WTC11 (cell line): ENCODE measurements at regions of chr16 and their contacts with region 1.

Region 1: GRCh38 chr16:50665128-50665878 is 15.8 kb downstream of the SNX20 start:
- DNase-seq: peak; percentile 89
- ATAC-seq: peak; percentile 81
- H3K4me3 Mint-ChIP-seq: peak overlapping the region; percentile 70
- H3K27ac Mint-ChIP-seq: peak overlapping the region; percentile 50; the same call in 1 of the 2 replicates
- H3K4me1 Mint-ChIP-seq: peaks cover 16% of the 10 kb centered on the region
- H3K27me3 Mint-ChIP-seq: peaks cover 5% of the 10 kb centered on the region
- CTCF ChIP-seq: peak; percentile 86

Region 2: DNA sequence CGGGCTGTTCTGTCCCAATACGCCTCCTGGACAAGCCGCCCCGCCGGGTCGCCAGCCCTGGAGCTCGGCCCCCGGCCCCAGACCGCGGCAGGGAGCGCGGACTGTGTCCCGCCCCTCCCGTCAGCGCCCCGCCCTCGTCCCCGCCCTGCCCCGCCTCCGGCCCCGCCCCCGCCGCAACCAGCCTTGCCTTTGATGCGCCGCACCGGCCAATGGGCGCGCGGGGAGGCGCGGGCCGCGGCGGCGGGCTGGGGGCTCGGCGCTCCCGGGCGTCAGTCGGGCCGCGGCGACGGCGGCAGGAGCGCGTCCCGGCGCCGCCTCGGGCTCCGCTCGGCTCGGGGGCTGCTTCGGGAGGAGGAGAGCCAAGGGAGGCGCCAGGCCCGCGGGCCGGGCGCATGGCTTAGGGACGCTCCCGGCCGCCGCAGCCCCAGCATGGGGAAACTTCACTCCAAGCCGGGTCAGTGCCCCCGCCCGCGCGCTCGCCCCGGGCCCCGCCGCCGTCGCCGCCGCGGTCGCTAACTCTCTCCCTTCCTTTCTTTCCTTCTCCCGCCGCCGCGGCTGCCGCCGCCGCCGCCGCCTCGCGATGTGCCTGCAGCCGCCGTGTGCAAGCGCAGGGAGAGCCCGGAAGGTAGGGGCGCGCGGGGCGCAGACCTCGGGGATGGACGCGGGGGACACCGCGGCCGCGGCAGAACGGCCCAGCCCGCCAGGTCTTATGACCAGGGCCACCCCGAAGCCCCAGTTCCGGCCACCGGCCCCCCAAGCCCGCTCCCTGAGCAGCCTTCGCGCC is 117.0 kb before region 1 on chr16 and contains the start of gene NKD1:
- CTCF ChIA-PET with region 1: interaction called, 11 read pairs
- POLR2A ChIA-PET with region 1: no interaction called
- DNase-seq: peak; percentile 69
- ATAC-seq: peak; percentile 79
- H3K4me3 Mint-ChIP-seq: peak within 1 kb of the TSS; percentile 75
- H3K27ac Mint-ChIP-seq: no peak within 1 kb of the TSS
- H3K4me1 Mint-ChIP-seq: peaks cover 11% of the 10 kb centered on the region
- H3K27me3 Mint-ChIP-seq: peaks cover 46% of the 10 kb centered on the region
- CTCF ChIP-seq: no peak
- total RNA-seq, gene NKD1: 6.0 to 9.3 TPM (median 9.1 TPM) in 3 replicates

Region 3: GRCh38 chr16:50611332-50611934 is 53.9 kb before region 1 on chr16:
- CTCF ChIA-PET with region 1: interaction called, 23 read pairs
- POLR2A ChIA-PET with region 1: no interaction called
- DNase-seq: no peak
- ATAC-seq: no peak
- H3K4me3 Mint-ChIP-seq: no peak overlapping the region
- H3K27ac Mint-ChIP-seq: no peak overlapping the region
- H3K4me1 Mint-ChIP-seq: peaks cover 27% of the 10 kb centered on the region
- H3K27me3 Mint-ChIP-seq: no peaks in the 10 kb centered on the region
- CTCF ChIP-seq: no peak

Region 4: DNA sequence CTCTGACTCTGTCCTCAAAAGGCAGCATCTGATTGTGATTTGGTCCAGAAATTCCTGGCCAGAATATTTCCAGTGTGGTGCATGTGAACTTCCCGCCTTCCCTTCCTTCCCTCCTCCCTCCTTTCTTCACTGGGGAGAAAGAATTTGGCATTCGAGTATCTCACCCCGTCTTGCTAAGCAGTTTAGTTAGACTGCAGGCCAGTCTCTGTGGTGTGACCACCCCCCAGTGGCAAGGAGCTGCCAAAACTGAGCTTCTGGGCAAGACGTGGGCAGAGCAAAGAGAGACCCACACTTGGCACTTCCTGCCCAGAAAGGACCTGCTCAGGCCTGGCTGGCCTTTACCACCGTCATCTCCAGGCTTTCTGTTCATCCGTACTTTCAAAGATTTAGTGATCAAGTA is 20.6 kb before region 1 on chr16:
- CTCF ChIA-PET with region 1: interaction called, 20 read pairs
- POLR2A ChIA-PET with region 1: no interaction called
- DNase-seq: peak; percentile 35
- ATAC-seq: peak; percentile 72
- H3K4me3 Mint-ChIP-seq: no peak overlapping the region
- H3K27ac Mint-ChIP-seq: no peak overlapping the region
- H3K4me1 Mint-ChIP-seq: peaks cover 15% of the 10 kb centered on the region
- H3K27me3 Mint-ChIP-seq: no peaks in the 10 kb centered on the region
- CTCF ChIP-seq: no peak

Region 5: DNA sequence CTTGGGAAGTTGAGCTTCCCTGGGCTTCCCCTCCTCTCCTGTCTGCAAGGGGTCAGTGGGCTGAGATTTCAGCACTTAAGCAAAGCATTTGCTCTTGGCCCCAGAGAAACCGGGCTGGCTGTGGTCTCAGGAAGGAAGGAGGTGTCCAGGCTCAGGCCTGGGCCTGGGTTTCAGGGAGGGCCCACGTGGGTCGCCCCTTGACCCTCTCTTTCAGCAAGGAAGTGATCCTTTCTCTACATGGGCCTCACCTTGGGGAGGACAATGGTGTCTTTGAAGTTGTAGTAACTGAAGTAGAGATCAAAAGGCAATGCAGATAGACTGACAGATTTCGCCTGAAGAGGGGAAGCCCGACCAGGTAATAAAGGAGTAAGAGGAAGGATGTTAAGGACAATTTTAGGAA is 30.8 kb after region 1 on chr16:
- CTCF ChIA-PET with region 1: no interaction called
- POLR2A ChIA-PET with region 1: no interaction called
- DNase-seq: no peak
- ATAC-seq: no peak
- H3K4me3 Mint-ChIP-seq: no peak overlapping the region
- H3K27ac Mint-ChIP-seq: no peak overlapping the region
- H3K4me1 Mint-ChIP-seq: no peaks in the 10 kb centered on the region
- H3K27me3 Mint-ChIP-seq: peaks cover 31% of the 10 kb centered on the region
- CTCF ChIP-seq: no peak

Region 6: DNA sequence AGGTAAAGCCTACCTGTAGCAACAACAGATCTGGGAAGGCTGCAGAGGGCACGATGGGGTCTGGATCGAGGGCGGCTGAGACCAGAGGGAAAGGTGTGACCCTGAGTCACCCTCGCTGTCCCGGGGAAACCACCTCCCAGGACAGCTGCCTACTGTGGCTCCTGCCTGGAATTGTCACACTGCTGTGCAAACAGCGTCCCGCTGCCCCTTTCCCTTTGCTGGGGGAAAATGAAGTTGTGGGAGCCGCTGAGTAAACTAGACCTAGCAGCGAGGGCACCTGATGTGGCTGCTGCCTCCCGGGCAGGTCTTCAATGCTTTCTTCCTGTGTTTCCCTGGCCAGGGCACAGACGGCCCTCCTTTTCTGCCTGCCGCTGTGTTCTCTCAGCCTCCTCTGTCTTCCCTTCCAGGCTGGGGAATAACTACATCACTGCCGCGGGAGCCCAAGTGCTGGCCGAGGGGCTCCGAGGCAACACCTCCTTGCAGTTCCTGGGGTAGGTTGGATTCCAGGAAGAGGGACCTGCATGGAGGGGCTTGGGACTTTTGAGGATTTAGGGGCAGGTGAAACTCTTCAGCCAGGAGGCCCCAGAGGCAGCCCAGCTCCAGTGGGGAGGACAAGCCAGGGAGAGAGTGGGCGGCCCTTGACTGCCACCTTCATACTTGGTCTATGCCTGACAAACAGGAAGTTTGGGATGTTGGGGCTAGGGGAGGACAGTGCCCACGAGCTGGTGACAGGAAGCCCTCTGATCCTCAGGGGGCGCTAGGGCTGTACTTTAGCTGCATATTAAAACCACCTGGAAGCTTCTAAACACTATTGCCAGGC is 54.4 kb after region 1 on chr16:
- CTCF ChIA-PET with region 1: interaction called, 13 read pairs
- POLR2A ChIA-PET with region 1: no interaction called
- DNase-seq: peak; percentile 29
- ATAC-seq: peak; percentile 85
- H3K4me3 Mint-ChIP-seq: no peak overlapping the region
- H3K27ac Mint-ChIP-seq: peak overlapping the region; percentile 41; the same call in 1 of the 2 replicates
- H3K4me1 Mint-ChIP-seq: peaks cover 12% of the 10 kb centered on the region
- H3K27me3 Mint-ChIP-seq: no peaks in the 10 kb centered on the region
- CTCF ChIP-seq: 0 out of 2 replicates have a peak, but pooled peaks have one; percentile 15